K562 (cell line): ENCODE measurements at regions of chr1 and their contacts with region 1.

Region 1: GRCh38 chr1:185681034-185681633 is 53.1 kb upstream of the HMCN1 start:
- DNase-seq: peak in 2 of 4 experiments; percentile 43 to 66
- ATAC-seq: peak; percentile 94
- H3K4me3 ChIP-seq: no peak overlapping the region
- H3K27ac ChIP-seq: no peak overlapping the region
- H3K4me1 ChIP-seq: no peaks in the 10 kb centered on the region
- H3K27me3 ChIP-seq: no peaks in the 10 kb centered on the region; a peak in 1 of 5 replicates
- CTCF ChIP-seq: peak; percentile 54 to 72 (median 60)
- EP300 ChIP-seq: no peak
- POLR2A ChIP-seq: no peak
- RAD21 ChIP-seq: peak; percentile 83 to 84

Region 2: GRCh38 chr1:184982002-184982954 is 698.9 kb before region 1 on chr1:
- CTCF ChIA-PET with region 1: interaction called, 3 read pairs
- POLR2A ChIA-PET with region 1: no interaction called
- in situ Hi-C with region 1: no loop called
- intact Hi-C with region 1: loop called (anchors 5 kb)
- DNase-seq: peak; percentile 63 to 88 (median 74)
- ATAC-seq: peak; percentile 100
- H3K4me3 ChIP-seq: no peak overlapping the region
- H3K27ac ChIP-seq: no peak overlapping the region
- H3K4me1 ChIP-seq: peaks cover 0 to 2% of the 10 kb centered on the region in 2 experiments; a peak in 2 of 5 replicates
- H3K27me3 ChIP-seq: peaks cover 0 to 2% of the 10 kb centered on the region in 2 experiments; a peak in 1 of 5 replicates
- CTCF ChIP-seq: peak; percentile 91 to 98 (median 98)
- EP300 ChIP-seq: peak; percentile 60; the same call in 1 of the 2 replicates
- POLR2A ChIP-seq: no peak
- RAD21 ChIP-seq: peak; percentile 98 to 99

Region 3: DNA sequence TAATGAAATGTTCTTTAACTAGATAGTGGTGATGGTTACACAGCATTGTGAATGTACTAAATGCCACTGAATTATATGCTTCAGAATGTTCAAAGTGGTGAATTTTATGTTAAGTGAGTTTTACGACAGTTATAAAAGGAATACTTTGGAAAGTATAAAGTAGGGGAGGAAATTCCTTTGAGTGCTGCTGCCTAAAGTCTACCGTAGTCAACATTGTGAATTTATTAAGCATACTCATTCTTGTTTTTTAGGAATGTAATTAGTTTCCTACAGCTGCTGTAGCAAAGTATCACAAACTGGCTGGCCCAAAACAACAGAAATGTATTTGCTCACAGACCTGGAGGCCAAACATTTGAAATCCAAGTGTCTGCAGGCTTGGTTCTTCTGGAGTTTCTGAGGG is 451.2 kb before region 1 on chr1:
- CTCF ChIA-PET with region 1: no interaction called
- POLR2A ChIA-PET with region 1: no interaction called
- in situ Hi-C with region 1: loop called (anchors 10 kb)
- intact Hi-C with region 1: no loop called
- DNase-seq: no peak
- ATAC-seq: no peak
- H3K4me3 ChIP-seq: no peak overlapping the region
- H3K27ac ChIP-seq: no peak overlapping the region
- H3K4me1 ChIP-seq: no peaks in the 10 kb centered on the region; a peak in 1 of 5 replicates
- H3K27me3 ChIP-seq: no peaks in the 10 kb centered on the region
- CTCF ChIP-seq: no peak
- EP300 ChIP-seq: no peak
- POLR2A ChIP-seq: no peak
- RAD21 ChIP-seq: no peak

Region 4: GRCh38 chr1:185297982-185298381 is 383.2 kb before region 1 on chr1:
- CTCF ChIA-PET with region 1: no interaction called
- POLR2A ChIA-PET with region 1: no interaction called
- in situ Hi-C with region 1: no loop called
- intact Hi-C with region 1: no loop called
- DNase-seq: no peak
- ATAC-seq: no peak
- H3K4me3 ChIP-seq: no peak overlapping the region
- H3K27ac ChIP-seq: no peak overlapping the region
- H3K4me1 ChIP-seq: peaks cover 0 to 6% of the 10 kb centered on the region in 2 experiments; a peak in 1 of 5 replicates
- H3K27me3 ChIP-seq: no peaks in the 10 kb centered on the region
- CTCF ChIP-seq: no peak
- EP300 ChIP-seq: no peak
- POLR2A ChIP-seq: no peak
- RAD21 ChIP-seq: no peak

Region 5: DNA sequence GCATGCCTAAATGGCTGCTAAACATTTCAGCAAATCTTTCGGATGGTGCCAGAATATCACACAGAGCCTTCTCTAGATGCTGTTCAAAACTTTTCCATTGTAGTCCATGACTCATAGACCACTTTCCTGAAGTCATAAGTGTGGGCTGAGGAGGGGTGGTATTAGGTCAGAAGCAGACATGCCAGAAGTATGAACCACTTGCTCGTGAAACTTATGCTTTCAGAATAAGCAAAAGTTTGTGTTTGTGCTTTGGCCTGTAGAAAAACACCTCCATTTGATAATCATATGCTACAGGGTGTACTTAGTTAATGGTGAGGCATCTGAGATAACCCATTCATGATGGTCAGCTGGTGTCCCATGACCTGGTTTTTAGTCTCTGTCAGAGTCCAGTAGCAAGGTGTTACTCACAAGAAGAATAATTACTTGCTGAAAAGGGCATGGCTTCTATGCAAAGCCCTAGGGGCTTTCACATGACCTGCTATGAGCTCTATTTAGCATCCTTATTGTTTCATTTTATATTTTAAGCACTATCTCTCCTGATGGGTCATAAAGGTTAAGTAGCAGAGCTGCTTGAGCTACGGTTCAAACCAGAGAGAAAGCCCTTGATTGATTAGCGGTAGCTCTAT is 181.0 kb before region 1 on chr1:
- CTCF ChIA-PET with region 1: no interaction called
- POLR2A ChIA-PET with region 1: no interaction called
- in situ Hi-C with region 1: no loop called
- intact Hi-C with region 1: no loop called
- DNase-seq: no peak
- ATAC-seq: no peak
- H3K4me3 ChIP-seq: no peak overlapping the region
- H3K27ac ChIP-seq: no peak overlapping the region
- H3K4me1 ChIP-seq: no peaks in the 10 kb centered on the region
- H3K27me3 ChIP-seq: peaks cover 0 to 8% of the 10 kb centered on the region in 2 experiments; a peak in 3 of 5 replicates
- CTCF ChIP-seq: no peak
- EP300 ChIP-seq: no peak
- POLR2A ChIP-seq: no peak
- RAD21 ChIP-seq: no peak

Region 6: DNA sequence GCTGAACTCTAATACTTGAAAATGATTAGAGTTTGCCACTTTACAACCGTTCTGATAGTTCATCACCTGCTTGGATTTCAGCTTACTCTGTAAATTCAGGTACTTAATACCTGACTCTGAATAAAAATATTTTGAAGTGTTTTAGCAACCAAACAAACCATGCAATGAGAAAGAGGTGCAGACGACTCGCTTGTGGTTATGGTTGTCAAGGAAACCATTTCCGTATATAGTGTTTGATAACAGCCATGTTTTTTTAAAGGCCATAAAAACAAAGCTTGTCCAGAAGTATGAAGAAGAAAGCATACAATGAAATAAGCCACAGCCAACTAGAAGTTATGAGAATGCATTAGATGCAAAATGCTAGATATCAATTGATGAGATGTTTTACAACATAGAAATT is 114.1 kb before region 1 on chr1:
- CTCF ChIA-PET with region 1: no interaction called
- POLR2A ChIA-PET with region 1: no interaction called
- in situ Hi-C with region 1: no loop called
- intact Hi-C with region 1: no loop called
- DNase-seq: peak in 1 of 4 experiments; percentile 11
- ATAC-seq: no peak
- H3K4me3 ChIP-seq: no peak overlapping the region
- H3K27ac ChIP-seq: no peak overlapping the region
- H3K4me1 ChIP-seq: no peaks in the 10 kb centered on the region; a peak in 1 of 5 replicates
- H3K27me3 ChIP-seq: no peaks in the 10 kb centered on the region; a peak in 1 of 5 replicates
- CTCF ChIP-seq: no peak
- EP300 ChIP-seq: no peak
- POLR2A ChIP-seq: no peak
- RAD21 ChIP-seq: no peak

Region 7: DNA sequence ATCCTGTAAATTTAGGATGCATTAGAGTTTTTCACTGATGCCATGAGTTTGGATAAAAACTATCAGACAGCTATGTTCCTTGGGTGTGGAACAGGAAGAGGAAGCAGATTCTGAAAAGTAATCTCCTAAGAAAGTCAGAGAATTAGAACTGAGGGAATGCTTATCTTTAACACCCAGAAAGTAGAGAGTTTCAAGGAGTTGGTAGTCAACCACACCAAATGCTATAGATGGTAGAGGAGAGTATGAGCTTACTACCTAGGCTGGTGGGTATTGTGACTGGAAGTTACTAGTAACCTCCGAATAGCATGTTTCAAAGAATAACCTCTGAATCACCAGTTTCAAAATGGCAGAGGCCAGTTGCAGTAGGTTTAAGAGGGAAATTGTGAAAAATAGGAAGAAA is 341.1 kb after region 1 on chr1:
- CTCF ChIA-PET with region 1: no interaction called
- POLR2A ChIA-PET with region 1: no interaction called
- in situ Hi-C with region 1: no loop called
- intact Hi-C with region 1: no loop called
- DNase-seq: peak in 2 of 4 experiments; percentile 34 to 40
- ATAC-seq: peak; percentile 77
- H3K4me3 ChIP-seq: no peak overlapping the region
- H3K27ac ChIP-seq: peak overlapping the region; percentile 70
- H3K4me1 ChIP-seq: peaks cover 0 to 7% of the 10 kb centered on the region in 2 experiments; a peak in 2 of 5 replicates
- H3K27me3 ChIP-seq: no peaks in the 10 kb centered on the region
- CTCF ChIP-seq: no peak
- EP300 ChIP-seq: peak; percentile 59; the same call in 1 of the 2 replicates
- POLR2A ChIP-seq: no peak
- RAD21 ChIP-seq: no peak